Ascending aorta (tissue), 2 donors: ENCODE measurements at regions of chr19 and their contacts with region 1.

Region 1: DNA sequence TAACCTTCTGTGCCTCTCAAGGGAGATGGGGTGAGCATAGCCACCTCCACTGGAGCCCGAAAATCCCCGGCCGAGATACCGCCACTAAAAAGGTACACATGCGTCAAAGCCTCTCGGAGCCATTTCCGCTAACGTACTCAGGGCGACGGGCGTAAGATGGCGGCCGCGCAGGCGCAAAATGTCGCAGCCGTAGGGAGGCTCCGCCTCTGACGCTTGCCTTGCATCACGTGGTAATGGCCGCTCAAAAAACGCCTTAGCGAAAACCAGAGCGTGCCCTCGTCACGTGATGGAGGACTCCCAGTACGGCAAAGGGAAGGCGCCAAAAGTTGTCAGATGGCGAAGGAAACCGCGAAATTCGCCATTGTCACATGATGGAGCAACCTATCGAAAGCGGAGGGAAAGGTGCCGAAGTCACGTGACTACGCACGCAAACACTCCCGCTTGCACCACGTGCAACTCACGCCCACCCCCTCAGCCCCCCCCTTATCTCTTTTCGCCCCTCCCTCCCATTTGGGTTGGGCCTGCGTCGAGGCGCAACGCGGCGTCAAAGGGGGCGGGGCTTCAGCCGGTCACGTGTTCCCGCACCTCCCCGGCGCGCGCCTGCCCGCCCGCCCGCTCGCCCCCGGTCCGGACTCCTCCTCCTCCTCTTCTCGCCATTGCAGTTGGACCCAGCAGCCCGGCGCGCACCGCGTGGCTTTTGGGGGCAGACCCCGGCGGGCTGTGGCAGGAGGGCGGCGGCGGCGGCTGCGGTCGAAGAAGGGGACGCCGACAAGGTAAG is at the start of gene ILF3:
- DNase-seq: peak; percentile 99 to 100
- H3K4me3 ChIP-seq: peak within 1 kb of the TSS; percentile 94 to 97
- H3K27ac ChIP-seq: peak within 1 kb of the TSS; percentile 97 to 100
- H3K4me1 ChIP-seq: peaks cover 0 to 23% of the 10 kb centered on the region in 2 donors
- H3K27me3 ChIP-seq: no peaks in the 10 kb centered on the region
- CTCF ChIP-seq: no peak
- total RNA-seq, gene ILF3: 168 TPM

Region 2: GRCh38 chr19:10565567-10566407 is 88.1 kb before region 1 on chr19 and contains the start of gene KRI1:
- intact Hi-C with region 1: loop called (anchors 1 kb)
- DNase-seq: peak; percentile 94 to 99
- H3K4me3 ChIP-seq: peak within 1 kb of the TSS; percentile 61 to 98
- H3K27ac ChIP-seq: peak within 1 kb of the TSS; percentile 78 to 93
- H3K4me1 ChIP-seq: peaks cover 12 to 26% of the 10 kb centered on the region in 2 donors
- H3K27me3 ChIP-seq: no peaks in the 10 kb centered on the region
- CTCF ChIP-seq: peak in 2 of 3 experiments; percentile 17 to 68
- total RNA-seq, gene KRI1: 21.9 TPM

Region 3: DNA sequence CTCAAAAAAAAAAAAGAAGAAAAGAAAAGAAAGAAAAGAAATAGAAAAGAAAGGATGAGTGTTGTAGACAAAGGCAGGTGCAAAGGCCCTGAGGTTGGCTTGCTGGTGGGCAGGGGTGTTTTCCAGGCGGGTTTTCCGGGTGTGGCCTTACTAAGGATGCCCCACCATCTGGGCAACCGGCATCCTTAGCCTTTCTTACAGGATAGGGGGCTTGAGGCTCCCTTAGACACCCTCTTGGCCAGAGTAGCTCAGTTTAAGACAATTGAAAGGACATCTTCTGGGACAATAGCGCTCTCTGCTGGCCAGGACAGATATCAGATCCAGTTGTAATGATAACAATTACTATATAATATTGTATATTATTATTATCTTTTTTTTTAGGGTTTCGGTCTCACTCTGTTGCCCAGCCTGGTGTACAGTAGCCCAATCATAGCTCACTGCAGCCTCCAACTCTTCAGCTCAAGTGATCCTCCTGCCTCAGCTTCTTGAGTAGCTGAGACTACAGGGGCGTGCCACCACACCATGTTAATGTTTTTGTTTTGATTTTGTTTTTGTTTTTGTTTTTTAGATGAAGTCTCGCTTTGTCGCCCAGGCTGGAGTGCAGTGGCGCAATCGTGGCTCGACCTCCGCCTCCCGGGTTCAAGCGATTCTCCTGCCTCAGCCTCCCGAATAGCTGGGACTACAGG is 45.9 kb after region 1 on chr19:
- intact Hi-C with region 1: loop called (anchors 1 kb)
- DNase-seq: no peak
- H3K4me3 ChIP-seq: no peak overlapping the region
- H3K27ac ChIP-seq: no peak overlapping the region
- H3K4me1 ChIP-seq: peaks cover 0 to 5% of the 10 kb centered on the region in 2 donors
- H3K27me3 ChIP-seq: no peaks in the 10 kb centered on the region
- CTCF ChIP-seq: peak; percentile 14 to 55 (median 27)